ENCODE measurements at regions of chr20 and their contacts with region 1.

Region 1: DNA sequence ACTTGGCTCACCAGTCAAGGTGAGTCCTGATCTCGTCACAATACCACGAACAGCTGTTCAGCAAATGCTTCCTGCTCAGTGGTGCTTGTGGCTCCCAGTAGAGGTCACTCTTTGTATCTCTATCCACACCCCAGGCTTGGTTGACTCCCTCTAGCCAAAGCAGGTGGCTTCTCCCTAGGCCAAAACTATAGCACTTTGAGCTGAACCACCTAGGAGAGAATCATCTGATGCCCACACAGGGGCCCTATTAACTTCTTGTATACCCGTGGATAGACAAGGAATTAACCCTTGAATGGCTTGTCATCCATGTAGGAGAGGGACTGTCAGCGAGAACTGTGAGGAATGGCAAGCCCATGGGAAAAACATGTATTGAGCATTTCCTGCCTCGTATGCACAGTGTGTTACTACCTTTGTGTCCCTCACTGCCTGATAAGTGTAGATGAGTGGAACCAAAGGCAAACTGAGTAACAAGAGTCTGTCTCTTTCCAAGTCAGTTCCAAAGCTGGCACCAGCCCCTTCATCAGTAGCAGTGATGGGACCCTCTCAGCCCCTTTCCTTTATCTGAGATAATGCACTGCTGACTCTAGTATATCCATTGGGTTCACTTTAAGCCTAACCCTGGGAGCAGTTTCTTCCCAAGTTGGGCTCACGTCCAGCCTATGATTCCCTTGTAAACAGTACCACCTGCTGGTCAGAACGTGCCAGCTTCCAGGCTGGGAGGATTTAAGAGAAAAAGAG is 42.5 kb downstream of the EIF2S2 start:
- DNase-seq: peak; percentile 62
- H3K4me3 Mint-ChIP-seq: no peak overlapping the region
- H3K27ac Mint-ChIP-seq: no peak overlapping the region
- H3K4me1 Mint-ChIP-seq: peaks cover 20% of the 10 kb centered on the region
- H3K27me3 Mint-ChIP-seq: no peaks in the 10 kb centered on the region

Region 2: DNA sequence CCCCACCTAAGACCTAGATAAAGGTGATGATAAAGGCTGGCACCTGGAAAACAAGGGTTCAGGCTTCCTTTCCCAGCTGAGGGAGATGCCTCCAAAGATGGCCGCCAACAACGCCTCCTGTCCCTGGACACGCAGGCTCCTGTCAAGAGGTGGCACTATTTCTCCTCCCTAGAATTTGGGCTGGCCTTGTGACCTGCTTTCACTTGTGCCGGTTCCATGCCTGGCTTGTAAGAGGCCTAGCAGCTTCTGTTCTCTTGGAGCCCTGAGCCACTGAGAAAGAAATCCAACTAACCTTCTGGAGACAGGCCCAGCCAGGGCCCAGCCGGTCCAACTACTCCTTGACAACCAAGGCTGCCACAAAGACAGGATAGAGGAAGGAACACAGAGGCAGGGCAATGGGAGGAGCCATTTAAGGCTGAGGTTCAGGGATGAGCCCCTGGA is 136.0 kb before region 1 on chr20:
- CTCF ChIA-PET with region 1: interaction called, 10 read pairs
- POLR2A ChIA-PET with region 1: no interaction called
- DNase-seq: peak; percentile 68
- H3K4me3 Mint-ChIP-seq: no peak overlapping the region
- H3K27ac Mint-ChIP-seq: no peak overlapping the region
- H3K4me1 Mint-ChIP-seq: peaks cover 2% of the 10 kb centered on the region
- H3K27me3 Mint-ChIP-seq: no peaks in the 10 kb centered on the region

Region 3: DNA sequence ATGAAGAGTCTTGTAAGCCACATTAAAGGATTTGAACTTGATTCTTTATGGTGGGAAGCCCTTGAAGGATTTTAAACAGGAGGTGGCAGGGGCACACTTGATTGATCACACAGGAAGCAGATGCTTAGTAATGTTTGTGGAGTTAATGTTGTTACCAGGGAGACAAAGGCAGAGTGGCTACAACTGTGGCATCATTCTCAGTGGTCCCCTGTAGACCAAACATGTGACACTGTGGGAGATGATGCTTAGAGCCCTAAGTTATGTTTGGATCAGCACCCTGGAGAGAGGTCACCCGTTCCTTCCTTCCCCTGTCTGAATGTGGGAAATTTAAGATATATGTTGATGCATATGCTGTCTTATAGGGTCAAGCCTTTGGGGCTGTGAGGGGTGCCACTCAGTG is 10.7 kb before region 1 on chr20:
- CTCF ChIA-PET with region 1: interaction called, 11 read pairs
- POLR2A ChIA-PET with region 1: interaction called, 3 read pairs
- DNase-seq: no peak
- H3K4me3 Mint-ChIP-seq: no peak overlapping the region
- H3K27ac Mint-ChIP-seq: no peak overlapping the region
- H3K4me1 Mint-ChIP-seq: peaks cover 31% of the 10 kb centered on the region
- H3K27me3 Mint-ChIP-seq: no peaks in the 10 kb centered on the region